CD4-positive, alpha-beta memory T cell (primary cell): ENCODE measurements at regions of chr12 and their contacts with region 1.

Region 1: GRCh38 chr12:101839324-101840283 is 8.8 kb upstream of the GNPTAB start:
- DNase-seq: peak; percentile 64 to 71 (median 67)
- H3K4me3 ChIP-seq: no peak overlapping the region
- H3K4me3 Mint-ChIP-seq: peak overlapping the region in 1 of 8 donors; percentile 10
- H3K27ac ChIP-seq: no peak overlapping the region
- H3K27ac Mint-ChIP-seq: peak overlapping the region in 3 of 7 donors; percentile 25 to 75 (median 30)
- H3K4me1 ChIP-seq: peaks cover 24% of the 10 kb centered on the region
- H3K4me1 Mint-ChIP-seq: peaks cover 7 to 16% (median 12%) of the 10 kb centered on the region in 4 donors
- H3K27me3 ChIP-seq: no peaks in the 10 kb centered on the region
- H3K27me3 Mint-ChIP-seq: no peaks in the 10 kb centered on the region

Region 2: GRCh38 chr12:101186291-101186690 is 653.3 kb before region 1 on chr12:
- CTCF ChIA-PET with region 1: no interaction called
- POLR2A ChIA-PET with region 1: no interaction called
- intact Hi-C with region 1: no loop called
- DNase-seq: no peak
- H3K4me3 ChIP-seq: no peak overlapping the region
- H3K4me3 Mint-ChIP-seq: no peak overlapping the region
- H3K27ac ChIP-seq: no peak overlapping the region
- H3K27ac Mint-ChIP-seq: no peak overlapping the region
- H3K4me1 ChIP-seq: no peaks in the 10 kb centered on the region
- H3K4me1 Mint-ChIP-seq: no peaks in the 10 kb centered on the region
- H3K27me3 ChIP-seq: no peaks in the 10 kb centered on the region
- H3K27me3 Mint-ChIP-seq: peaks cover 0 to 1% of the 10 kb centered on the region in 2 donors

Region 3: DNA sequence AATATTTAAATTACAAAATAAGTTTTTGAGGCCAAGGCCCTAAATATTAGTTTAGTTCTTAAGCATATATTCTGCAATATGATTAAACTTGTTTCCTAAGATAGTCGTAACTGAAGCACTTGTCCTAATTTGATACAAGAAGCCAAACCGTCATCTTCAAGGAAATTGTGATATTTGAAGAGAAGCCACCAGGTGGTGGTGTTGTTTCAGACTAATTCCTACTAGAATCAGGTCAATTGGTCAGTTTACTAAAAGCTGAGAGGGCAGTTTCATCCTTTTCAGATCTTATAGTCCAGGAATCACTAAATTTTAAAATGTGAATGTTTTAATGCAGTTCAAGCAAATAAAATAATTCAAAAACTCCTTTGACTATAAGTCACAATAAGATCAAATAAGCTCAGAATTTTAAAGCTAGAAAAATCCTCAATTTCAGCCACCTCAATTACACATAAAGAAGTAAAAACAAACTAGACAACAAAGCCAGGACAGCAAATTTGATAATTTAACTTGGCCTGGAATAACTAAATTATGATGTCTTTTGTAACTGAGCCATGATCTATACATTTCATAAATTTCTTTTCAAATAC is 425.0 kb before region 1 on chr12:
- CTCF ChIA-PET with region 1: interaction called, 10 read pairs
- POLR2A ChIA-PET with region 1: no interaction called
- intact Hi-C with region 1: loop called (anchors 1 kb)
- DNase-seq: peak; percentile 3 to 32 (median 21)
- H3K4me3 ChIP-seq: no peak overlapping the region
- H3K4me3 Mint-ChIP-seq: no peak overlapping the region
- H3K27ac ChIP-seq: no peak overlapping the region
- H3K27ac Mint-ChIP-seq: no peak overlapping the region
- H3K4me1 ChIP-seq: no peaks in the 10 kb centered on the region
- H3K4me1 Mint-ChIP-seq: no peaks in the 10 kb centered on the region
- H3K27me3 ChIP-seq: no peaks in the 10 kb centered on the region
- H3K27me3 Mint-ChIP-seq: peaks cover 0 to 1% of the 10 kb centered on the region in 2 donors

Region 4: DNA sequence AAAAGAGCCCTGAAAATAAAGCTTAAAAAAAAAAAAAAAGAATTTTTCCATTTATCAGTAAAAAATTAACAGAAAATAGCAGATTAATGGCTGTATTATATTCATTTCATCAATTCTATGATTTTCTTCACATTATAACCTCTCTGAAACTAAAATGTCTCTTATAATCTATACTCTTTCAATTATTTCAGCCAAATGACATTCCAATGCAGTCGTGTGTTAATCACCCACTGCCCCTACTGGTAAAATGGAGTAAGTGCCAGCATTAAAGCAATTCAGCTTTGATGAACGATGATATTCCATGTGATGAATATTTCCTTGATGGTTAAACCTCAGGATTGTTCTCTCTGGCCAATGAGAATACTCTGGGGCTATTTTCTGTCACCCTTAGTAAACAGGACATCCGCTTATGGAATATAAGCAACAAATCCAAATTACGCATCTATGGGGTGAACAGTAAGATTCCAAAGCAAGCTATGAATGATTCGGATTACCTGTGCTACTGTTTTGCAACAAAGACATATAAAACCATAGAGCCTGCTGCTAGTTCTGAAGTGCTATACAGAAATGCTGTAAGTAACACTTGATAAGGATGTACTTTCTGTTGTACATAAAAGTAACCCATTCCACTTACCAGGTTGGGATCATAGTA is 80.1 kb before region 1 on chr12:
- CTCF ChIA-PET with region 1: interaction called, 13 read pairs
- POLR2A ChIA-PET with region 1: no interaction called
- intact Hi-C with region 1: no loop called
- DNase-seq: peak; percentile 22 to 49 (median 29)
- H3K4me3 ChIP-seq: no peak overlapping the region
- H3K4me3 Mint-ChIP-seq: no peak overlapping the region
- H3K27ac ChIP-seq: no peak overlapping the region
- H3K27ac Mint-ChIP-seq: no peak overlapping the region
- H3K4me1 ChIP-seq: no peaks in the 10 kb centered on the region
- H3K4me1 Mint-ChIP-seq: peaks cover 0 to 3% (median 1%) of the 10 kb centered on the region in 4 donors
- H3K27me3 ChIP-seq: no peaks in the 10 kb centered on the region
- H3K27me3 Mint-ChIP-seq: no peaks in the 10 kb centered on the region

Region 5: GRCh38 chr12:101782273-101782731 is 57.3 kb before region 1 on chr12:
- CTCF ChIA-PET with region 1: interaction called, 97 read pairs
- POLR2A ChIA-PET with region 1: interaction called, 3 read pairs
- intact Hi-C with region 1: no loop called
- DNase-seq: no peak
- H3K4me3 ChIP-seq: no peak overlapping the region
- H3K4me3 Mint-ChIP-seq: no peak overlapping the region
- H3K27ac ChIP-seq: no peak overlapping the region
- H3K27ac Mint-ChIP-seq: peak overlapping the region in 4 of 7 donors; percentile 14 to 58 (median 29)
- H3K4me1 ChIP-seq: no peaks in the 10 kb centered on the region
- H3K4me1 Mint-ChIP-seq: peaks cover 0 to 6% (median 1%) of the 10 kb centered on the region in 4 donors
- H3K27me3 ChIP-seq: no peaks in the 10 kb centered on the region
- H3K27me3 Mint-ChIP-seq: no peaks in the 10 kb centered on the region

Region 6: GRCh38 chr12:101823891-101824290 is 15.7 kb before region 1 on chr12:
- CTCF ChIA-PET with region 1: interaction called, 115 read pairs
- POLR2A ChIA-PET with region 1: interaction called, 7 read pairs
- intact Hi-C with region 1: no loop called
- DNase-seq: peak; percentile 74 to 87 (median 80)
- H3K4me3 ChIP-seq: no peak overlapping the region
- H3K4me3 Mint-ChIP-seq: peak overlapping the region in 7 of 8 donors; percentile 26 to 82 (median 69)
- H3K27ac ChIP-seq: no peak overlapping the region
- H3K27ac Mint-ChIP-seq: peak overlapping the region; percentile 64 to 95 (median 81)
- H3K4me1 ChIP-seq: peaks cover 44% of the 10 kb centered on the region
- H3K4me1 Mint-ChIP-seq: peaks cover 38 to 71% (median 51%) of the 10 kb centered on the region in 4 donors
- H3K27me3 ChIP-seq: no peaks in the 10 kb centered on the region
- H3K27me3 Mint-ChIP-seq: no peaks in the 10 kb centered on the region

Region 7: GRCh38 chr12:101891462-101892273 is 52.1 kb after region 1 on chr12:
- CTCF ChIA-PET with region 1: no interaction called
- POLR2A ChIA-PET with region 1: no interaction called
- intact Hi-C with region 1: no loop called
- DNase-seq: no peak
- H3K4me3 ChIP-seq: no peak overlapping the region
- H3K4me3 Mint-ChIP-seq: no peak overlapping the region
- H3K27ac ChIP-seq: no peak overlapping the region
- H3K27ac Mint-ChIP-seq: no peak overlapping the region
- H3K4me1 ChIP-seq: no peaks in the 10 kb centered on the region
- H3K4me1 Mint-ChIP-seq: no peaks in the 10 kb centered on the region
- H3K27me3 ChIP-seq: no peaks in the 10 kb centered on the region
- H3K27me3 Mint-ChIP-seq: no peaks in the 10 kb centered on the region